ENCODE measurements at regions of chr11 and their contacts with region 1.

Region 1: DNA sequence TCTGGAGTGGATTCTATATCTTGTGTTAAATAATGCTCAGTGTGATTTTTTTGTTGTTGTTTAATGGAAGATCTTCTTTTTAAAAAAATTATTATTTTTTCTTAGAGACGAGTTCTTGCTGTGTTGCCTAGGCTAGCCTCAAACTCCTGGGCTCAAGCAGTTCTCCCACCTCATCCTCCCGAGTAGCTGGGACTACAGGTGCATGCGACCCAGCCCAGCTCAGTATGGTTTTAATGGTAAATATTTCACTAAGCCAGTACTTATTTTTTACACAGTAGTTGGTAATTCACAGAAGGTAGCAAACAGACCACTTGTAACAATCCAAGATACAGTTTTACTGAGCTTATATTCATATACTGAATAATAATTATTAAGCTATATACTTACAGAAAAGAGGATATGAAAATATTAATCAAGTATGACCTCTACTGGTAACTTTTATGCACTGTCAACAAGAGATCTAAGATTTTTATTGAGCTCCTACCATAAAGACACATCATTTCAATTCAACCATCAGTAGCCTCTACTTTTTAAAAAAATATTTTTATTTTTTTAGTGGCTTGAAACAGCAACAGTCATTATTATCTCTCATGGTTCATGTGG is 6.1 kb upstream of the CD59 start:
- DNase-seq: no peak
- H3K4me3 ChIP-seq: no peak overlapping the region
- H3K27ac ChIP-seq: no peak overlapping the region
- H3K4me1 ChIP-seq: no peaks in the 10 kb centered on the region
- H3K27me3 ChIP-seq: no peaks in the 10 kb centered on the region
- CTCF ChIP-seq: peak; percentile 14 to 52 (median 32)

Region 2: DNA sequence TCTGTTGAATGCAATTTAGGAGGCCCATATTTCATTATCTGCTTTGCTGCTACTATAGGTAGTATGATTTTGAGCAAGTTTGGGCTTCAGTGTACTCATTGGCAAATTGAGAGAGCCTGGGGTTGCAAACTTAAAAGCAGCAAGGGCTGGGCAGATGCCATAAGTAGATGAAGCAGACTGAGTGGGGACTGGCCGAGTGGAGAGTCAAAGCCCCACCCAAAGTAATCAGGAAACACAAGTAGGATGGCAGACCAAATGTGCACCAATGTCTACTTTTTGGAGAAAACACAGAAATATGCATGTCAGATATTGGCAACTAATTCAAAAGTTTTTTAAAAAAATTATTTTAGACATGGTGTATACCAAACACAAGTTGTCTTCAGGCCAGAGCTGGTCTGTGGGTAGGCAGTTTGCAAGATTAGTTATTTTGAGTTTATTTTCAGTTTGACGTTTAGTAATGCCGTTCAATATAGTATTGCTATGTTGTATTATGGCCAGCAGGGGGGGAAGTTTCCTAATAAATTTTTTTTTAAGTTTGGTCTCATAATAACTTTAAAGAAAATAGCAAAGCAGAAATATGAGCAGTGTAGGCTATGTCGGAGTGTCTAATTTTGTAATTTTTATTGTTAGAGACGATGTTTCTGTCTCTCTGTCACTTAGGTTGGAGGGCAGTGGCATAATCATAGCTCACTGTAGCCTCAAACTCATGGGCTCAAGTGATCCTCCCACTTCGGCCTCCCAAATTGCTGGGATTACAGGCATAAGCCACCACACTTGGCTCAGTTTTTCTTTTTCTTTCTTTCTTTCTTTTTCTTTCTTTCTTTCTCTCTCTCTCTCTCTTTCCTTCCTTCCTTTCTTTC is 380.1 kb before region 1 on chr11:
- intact Hi-C with region 1: loop called (anchors 5 kb)
- DNase-seq: no peak
- H3K4me3 ChIP-seq: no peak overlapping the region
- H3K27ac ChIP-seq: no peak overlapping the region
- H3K4me1 ChIP-seq: no peaks in the 10 kb centered on the region
- H3K27me3 ChIP-seq: no peaks in the 10 kb centered on the region
- CTCF ChIP-seq: peak; percentile 46 to 67 (median 62)

Region 3: DNA sequence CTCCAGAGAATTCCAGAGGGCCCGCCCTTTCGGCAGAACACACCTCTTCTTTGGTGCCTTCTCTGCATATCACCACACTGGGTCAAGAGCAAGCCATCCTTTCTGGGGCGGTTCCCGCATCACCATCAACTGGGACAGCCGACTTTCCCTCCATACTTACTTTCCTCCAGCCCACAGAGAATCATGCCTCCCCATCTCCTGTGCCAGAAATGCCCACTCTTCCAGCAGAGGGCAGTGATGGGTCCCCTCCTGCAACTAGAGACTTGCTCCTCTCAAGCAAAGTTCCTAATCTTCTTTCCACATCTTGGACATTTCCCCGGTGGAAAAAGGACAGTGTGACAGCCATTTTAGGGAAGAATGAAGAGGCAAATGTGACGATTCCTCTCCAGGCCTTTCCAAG is 199.4 kb before region 1 on chr11:
- intact Hi-C with region 1: loop called (anchors 1 kb)
- DNase-seq: no peak
- H3K4me3 ChIP-seq: no peak overlapping the region
- H3K27ac ChIP-seq: no peak overlapping the region
- H3K4me1 ChIP-seq: no peaks in the 10 kb centered on the region
- H3K27me3 ChIP-seq: no peaks in the 10 kb centered on the region
- CTCF ChIP-seq: peak in 2 of 3 experiments; percentile 35 to 50

Region 4: DNA sequence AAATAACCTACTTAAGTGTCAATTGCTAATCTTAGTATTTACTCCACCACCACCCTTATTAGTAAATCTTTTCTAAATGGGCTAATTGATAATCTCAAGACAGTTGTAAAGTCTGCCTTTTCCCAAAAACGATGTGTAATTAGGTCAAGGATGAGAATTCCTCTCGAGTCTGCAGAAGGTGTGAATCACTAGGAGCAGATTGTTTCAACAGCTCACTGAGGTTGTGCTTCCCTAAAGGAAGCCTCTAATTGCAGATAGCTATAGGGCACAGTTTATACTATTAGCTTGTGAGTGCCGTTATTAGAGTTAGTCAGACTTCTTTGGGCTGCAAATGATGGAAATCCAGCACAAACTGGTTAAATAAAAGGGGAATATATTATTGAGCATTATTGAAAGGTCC is 126.6 kb before region 1 on chr11:
- intact Hi-C with region 1: no loop called
- DNase-seq: no peak
- H3K4me3 ChIP-seq: no peak overlapping the region
- H3K27ac ChIP-seq: no peak overlapping the region
- H3K4me1 ChIP-seq: no peaks in the 10 kb centered on the region
- H3K27me3 ChIP-seq: no peaks in the 10 kb centered on the region
- CTCF ChIP-seq: no peak

Region 5: GRCh38 chr11:33642461-33643166 is 99.7 kb before region 1 on chr11:
- intact Hi-C with region 1: no loop called
- DNase-seq: no peak
- H3K4me3 ChIP-seq: no peak overlapping the region
- H3K27ac ChIP-seq: no peak overlapping the region
- H3K4me1 ChIP-seq: peaks cover 0 to 7% of the 10 kb centered on the region in 2 donors
- H3K27me3 ChIP-seq: no peaks in the 10 kb centered on the region
- CTCF ChIP-seq: no peak

Region 6: DNA sequence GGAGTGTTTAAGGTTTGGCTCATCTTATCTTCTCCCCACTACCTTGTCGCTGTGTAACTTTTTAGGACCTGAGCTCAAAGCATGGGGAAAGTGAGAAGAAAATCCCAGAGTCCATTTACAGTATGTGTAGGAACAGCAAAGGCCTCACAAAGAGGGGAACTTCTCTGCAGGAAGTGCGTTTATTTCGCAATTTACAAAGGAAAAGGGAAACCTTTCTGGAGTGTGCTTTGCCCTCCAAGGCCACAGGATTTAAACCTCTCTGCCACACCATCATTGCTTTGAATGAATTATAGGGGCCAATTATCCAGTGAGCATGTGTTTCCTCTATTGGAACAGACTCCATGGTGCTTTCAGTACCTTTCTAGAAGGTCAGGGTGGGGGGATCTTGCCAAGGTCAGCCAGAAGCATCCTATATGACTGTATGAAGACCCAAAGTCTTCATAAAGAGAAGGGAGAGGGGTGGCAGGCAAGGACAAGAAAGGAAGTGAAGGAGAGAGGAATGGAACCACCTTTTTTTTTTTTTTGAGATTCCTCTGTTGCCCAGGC is 217.6 kb after region 1 on chr11:
- intact Hi-C with region 1: no loop called
- DNase-seq: no peak
- H3K4me3 ChIP-seq: no peak overlapping the region
- H3K27ac ChIP-seq: no peak overlapping the region
- H3K4me1 ChIP-seq: no peaks in the 10 kb centered on the region
- H3K27me3 ChIP-seq: no peaks in the 10 kb centered on the region
- CTCF ChIP-seq: no peak